CD8-positive, alpha-beta memory T cell (primary cell): ENCODE measurements at regions of chr4 and their contacts with region 1.

Region 1: DNA sequence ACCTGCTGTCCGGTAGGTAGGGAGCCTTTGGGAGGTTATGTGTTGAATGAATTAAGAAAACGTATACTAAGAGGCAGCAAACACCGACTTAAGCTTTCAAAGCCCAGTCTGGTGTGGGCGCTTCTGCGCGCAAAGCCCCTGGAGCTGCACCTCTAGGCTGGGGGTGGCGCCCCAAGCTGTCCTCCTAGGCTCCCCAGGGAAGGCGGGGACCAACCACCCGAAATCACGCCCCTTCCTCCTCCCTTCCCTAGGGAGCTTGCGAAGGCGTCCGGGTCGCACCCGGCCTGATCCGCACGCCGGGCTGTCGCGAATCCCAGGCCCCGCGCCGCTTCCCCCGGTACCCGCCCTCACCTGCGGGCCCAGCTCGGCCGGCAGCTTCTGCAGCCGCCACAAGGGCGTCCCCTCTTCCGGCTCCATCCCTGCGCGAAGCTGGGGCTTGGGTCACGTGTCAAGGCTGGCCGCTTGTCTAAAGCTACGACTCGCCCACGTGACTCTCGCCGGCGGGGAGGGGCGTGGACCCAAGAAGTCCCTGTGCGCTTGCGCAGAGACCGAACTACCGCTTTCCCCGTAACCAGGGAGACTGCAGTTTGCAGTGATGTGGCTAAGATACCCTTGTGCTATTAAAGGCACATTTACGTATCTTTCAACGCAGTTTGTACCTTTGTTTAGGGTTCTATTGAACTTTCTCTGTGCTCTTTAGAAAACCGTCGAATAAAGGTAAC is at the start of gene COMMD8:
- DNase-seq: peak; percentile 95 to 99 (median 98)
- H3K4me3 ChIP-seq: peak within 1 kb of the TSS; percentile 85
- H3K4me3 Mint-ChIP-seq: peak within 1 kb of the TSS; percentile 89 to 95 (median 91)
- H3K27ac ChIP-seq: peak within 1 kb of the TSS; percentile 77
- H3K27ac Mint-ChIP-seq: peak within 1 kb of the TSS; percentile 93 to 97 (median 95)
- H3K4me1 ChIP-seq: peaks cover 22% of the 10 kb centered on the region
- H3K4me1 Mint-ChIP-seq: peaks cover 32 to 50% (median 45%) of the 10 kb centered on the region in 3 donors
- H3K27me3 ChIP-seq: no peaks in the 10 kb centered on the region
- H3K27me3 Mint-ChIP-seq: no peaks in the 10 kb centered on the region
- total RNA-seq, gene COMMD8: 29.0 to 33.6 TPM

Region 2: DNA sequence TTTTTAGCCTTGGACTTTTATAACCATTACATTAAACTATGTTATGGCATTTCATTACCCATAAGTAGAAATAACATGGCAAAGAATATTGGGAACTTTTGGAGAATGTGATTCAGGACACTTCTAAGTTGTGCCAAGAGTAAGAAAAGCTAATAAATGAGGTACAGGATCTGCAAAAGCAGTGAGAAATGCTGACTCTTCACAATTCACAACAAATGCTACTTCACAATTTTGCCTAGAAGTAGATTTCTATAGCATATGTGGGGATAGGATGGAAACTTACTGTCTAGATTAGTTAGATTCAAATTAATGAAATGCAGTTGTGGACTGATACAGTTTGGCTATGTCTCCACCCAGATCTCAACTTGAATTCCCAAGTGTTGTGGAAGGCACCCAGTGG is 173.6 kb before region 1 on chr4:
- CTCF ChIA-PET with region 1: no interaction called
- POLR2A ChIA-PET with region 1: no interaction called
- DNase-seq: no peak
- H3K4me3 ChIP-seq: no peak overlapping the region
- H3K4me3 Mint-ChIP-seq: no peak overlapping the region
- H3K27ac ChIP-seq: no peak overlapping the region
- H3K27ac Mint-ChIP-seq: no peak overlapping the region
- H3K4me1 ChIP-seq: no peaks in the 10 kb centered on the region
- H3K4me1 Mint-ChIP-seq: no peaks in the 10 kb centered on the region
- H3K27me3 ChIP-seq: no peaks in the 10 kb centered on the region
- H3K27me3 Mint-ChIP-seq: peaks cover 2 to 19% of the 10 kb centered on the region in 2 donors

Region 3: GRCh38 chr4:47485047-47485692 is 21.8 kb after region 1 on chr4 and contains the start of gene ATP10D:
- CTCF ChIA-PET with region 1: interaction called, 11 read pairs
- POLR2A ChIA-PET with region 1: interaction called, 11 read pairs
- DNase-seq: peak; percentile 68 to 83 (median 75)
- H3K4me3 ChIP-seq: peak within 1 kb of the TSS; percentile 88
- H3K4me3 Mint-ChIP-seq: peak within 1 kb of the TSS; percentile 90 to 99 (median 98)
- H3K27ac ChIP-seq: peak within 1 kb of the TSS; percentile 67
- H3K27ac Mint-ChIP-seq: peak within 1 kb of the TSS; percentile 87 to 99 (median 96)
- H3K4me1 ChIP-seq: peaks cover 18% of the 10 kb centered on the region
- H3K4me1 Mint-ChIP-seq: peaks cover 35 to 44% (median 41%) of the 10 kb centered on the region in 3 donors
- H3K27me3 ChIP-seq: no peaks in the 10 kb centered on the region
- H3K27me3 Mint-ChIP-seq: no peaks in the 10 kb centered on the region
- total RNA-seq, gene ATP10D: 6.3 to 7.2 TPM

Region 4: GRCh38 chr4:47562297-47562696 is 98.9 kb after region 1 on chr4:
- CTCF ChIA-PET with region 1: interaction called, 16 read pairs
- POLR2A ChIA-PET with region 1: no interaction called
- DNase-seq: peak in 1 of 5 donors; percentile 3
- H3K4me3 ChIP-seq: no peak overlapping the region
- H3K4me3 Mint-ChIP-seq: no peak overlapping the region
- H3K27ac ChIP-seq: no peak overlapping the region
- H3K27ac Mint-ChIP-seq: peak overlapping the region in 1 of 8 donors; percentile 1
- H3K4me1 ChIP-seq: no peaks in the 10 kb centered on the region
- H3K4me1 Mint-ChIP-seq: peaks cover 12 to 20% (median 18%) of the 10 kb centered on the region in 3 donors
- H3K27me3 ChIP-seq: no peaks in the 10 kb centered on the region
- H3K27me3 Mint-ChIP-seq: no peaks in the 10 kb centered on the region